A549 (cell line): ENCODE measurements at regions of chr20 and their contacts with region 1.

Region 1: GRCh38 chr20:47620808-47621805 is 119.4 kb downstream of the NCOA3 start:
- DNase-seq: peak in 1 of 2 experiments; percentile 71
- ATAC-seq: peak; percentile 37 to 39; a peak in 2 of 6 replicates
- H3K4me3 ChIP-seq: no peak overlapping the region
- H3K27ac ChIP-seq: peak overlapping the region; percentile 58 to 60
- H3K4me1 ChIP-seq: peaks cover 47% of the 10 kb centered on the region
- CTCF ChIP-seq: peak; percentile 93
- EP300 ChIP-seq: no peak
- POLR2A ChIP-seq: no peak
- RAD21 ChIP-seq: peak; percentile 86 to 92

Region 2: DNA sequence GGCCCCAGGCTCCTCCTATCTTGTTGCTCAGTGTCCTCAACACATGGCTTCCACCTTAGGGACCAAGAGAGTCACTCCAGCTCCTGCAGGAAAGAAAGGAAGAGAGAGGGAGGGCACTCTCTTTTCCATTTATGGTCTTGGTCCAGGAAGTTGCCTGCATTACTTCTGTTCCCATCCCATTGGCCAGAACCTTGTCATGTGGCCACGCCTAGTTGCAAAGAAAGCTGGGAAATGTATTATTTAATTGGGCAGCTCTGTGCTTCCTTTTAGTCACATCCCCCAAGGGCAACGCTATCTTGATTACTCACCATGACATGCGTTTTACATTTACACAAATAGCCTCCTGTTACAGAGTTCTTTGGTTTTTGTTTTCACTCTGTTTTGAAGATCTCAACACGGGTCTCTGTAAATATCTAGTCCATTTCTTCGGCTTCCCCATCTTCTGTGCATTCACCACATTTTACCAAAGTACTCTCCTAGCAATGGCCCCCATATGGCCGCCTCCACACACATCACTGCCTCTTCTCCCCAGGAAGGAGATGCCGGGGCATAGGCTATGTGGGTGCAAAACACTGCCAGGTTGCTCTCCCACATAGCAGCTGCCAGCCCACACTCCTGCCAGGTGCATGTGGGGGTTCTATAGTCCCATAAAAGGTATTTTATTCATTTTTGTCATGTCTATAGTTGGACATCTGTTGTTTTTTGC is 228.9 kb before region 1 on chr20:
- CTCF ChIA-PET with region 1: interaction called, 12 read pairs
- POLR2A ChIA-PET with region 1: no interaction called
- DNase-seq: peak; percentile 83 to 99
- ATAC-seq: peak; percentile 81 to 85
- H3K4me3 ChIP-seq: no peak overlapping the region
- H3K27ac ChIP-seq: peak overlapping the region; percentile 90 to 92
- H3K4me1 ChIP-seq: peaks cover 40% of the 10 kb centered on the region
- CTCF ChIP-seq: no peak
- EP300 ChIP-seq: no peak
- POLR2A ChIP-seq: no peak
- RAD21 ChIP-seq: peak in 1 of 2 experiments; percentile 28; a peak in 2 of 5 replicates

Region 3: GRCh38 chr20:47610247-47610944 is 10.7 kb before region 1 on chr20:
- CTCF ChIA-PET with region 1: interaction called, 24 read pairs
- POLR2A ChIA-PET with region 1: no interaction called
- DNase-seq: peak; percentile 67 to 71
- ATAC-seq: peak; percentile 86 to 97
- H3K4me3 ChIP-seq: no peak overlapping the region
- H3K27ac ChIP-seq: peak overlapping the region; percentile 42 to 83
- H3K4me1 ChIP-seq: peaks cover 71% of the 10 kb centered on the region
- CTCF ChIP-seq: no peak
- EP300 ChIP-seq: no peak
- POLR2A ChIP-seq: no peak
- RAD21 ChIP-seq: no peak